ENCODE measurements at regions of chr21 and their contacts with region 1.

Region 1: DNA sequence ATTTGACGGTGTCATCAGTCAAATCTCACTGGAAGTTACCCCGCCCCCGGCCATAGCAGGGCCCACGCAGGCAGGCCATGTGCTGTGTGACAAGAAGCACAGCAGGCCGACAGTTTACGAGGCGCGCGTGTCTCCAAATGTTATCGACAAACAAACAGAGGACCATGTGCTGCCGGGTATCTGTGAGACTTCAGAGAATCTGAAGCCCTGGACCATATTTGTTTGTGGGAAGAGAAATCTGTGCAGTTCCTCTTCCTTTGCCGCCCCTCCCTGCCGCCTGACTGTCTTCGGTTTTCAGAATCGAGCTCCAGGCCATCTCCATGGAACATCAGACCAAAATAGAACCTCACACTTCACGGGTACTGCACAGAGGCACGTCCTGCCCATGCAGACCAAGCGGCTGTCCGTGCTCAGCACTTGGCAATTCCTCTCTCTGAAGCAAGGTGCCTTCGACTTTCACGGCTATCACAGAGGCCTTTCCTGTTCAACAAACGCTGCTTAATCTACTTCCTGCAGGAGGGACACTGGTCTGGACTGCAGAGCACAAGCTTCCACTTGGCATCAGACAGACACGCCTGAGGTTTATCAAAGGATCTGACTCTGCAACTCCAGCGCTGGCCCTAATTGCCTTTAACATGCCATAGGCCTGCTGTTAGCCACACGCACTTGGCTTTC is 135.7 kb upstream of the KRTAP19-8 start:
- DNase-seq: peak in 12 of 14 experiments; percentile 39 to 68 (median 50)
- ATAC-seq: peak; percentile 64
- H3K4me3 ChIP-seq: peak overlapping the region; percentile 22
- H3K4me3 Mint-ChIP-seq: peak overlapping the region; percentile 81
- H3K27ac ChIP-seq: no peak overlapping the region
- H3K27ac Mint-ChIP-seq: peak overlapping the region; percentile 86
- H3K4me1 ChIP-seq: peaks cover 70% of the 10 kb centered on the region
- H3K4me1 Mint-ChIP-seq: peaks cover 92% of the 10 kb centered on the region
- H3K27me3 ChIP-seq: no peaks in the 10 kb centered on the region
- H3K27me3 Mint-ChIP-seq: no peaks in the 10 kb centered on the region
- CTCF ChIP-seq: no peak

Region 2: DNA sequence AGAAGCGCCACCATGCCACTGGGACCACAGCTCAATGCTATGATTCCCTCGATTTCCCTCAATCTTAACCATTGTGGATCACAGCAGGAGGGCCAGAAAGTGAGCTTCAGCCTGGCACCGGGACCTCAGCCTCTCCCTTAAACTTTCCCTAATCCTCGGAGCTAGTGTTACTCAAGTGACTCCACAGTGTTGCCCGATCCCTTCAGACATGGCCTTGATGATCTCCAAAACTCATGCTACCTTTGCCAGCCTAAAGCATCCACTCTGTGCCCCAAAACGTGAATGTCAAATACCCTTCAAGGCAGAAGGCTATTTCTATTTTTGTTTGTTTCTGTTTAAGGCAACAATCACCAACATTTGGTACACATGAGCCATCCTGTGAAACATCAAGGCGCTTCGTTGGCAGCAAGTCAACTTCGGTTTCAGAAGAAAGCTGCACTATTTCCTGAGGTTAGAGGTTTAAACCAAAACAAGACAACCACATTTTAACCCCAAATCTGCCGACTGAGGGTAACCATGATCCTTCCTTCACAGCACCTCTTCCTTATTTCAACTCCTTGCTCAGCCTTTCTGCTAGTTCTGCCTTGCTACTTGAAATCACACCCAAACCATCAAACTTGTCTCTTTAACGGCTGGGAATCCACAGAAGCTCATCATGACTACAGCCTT is 41.3 kb before region 1 on chr21:
- CTCF ChIA-PET with region 1: no interaction called
- POLR2A ChIA-PET with region 1: interaction called, 9 read pairs
- intact Hi-C with region 1: loop called in 1 of 2 experiments (anchors 2 kb)
- DNase-seq: peak; percentile 52 to 92 (median 71)
- ATAC-seq: peak; percentile 91
- H3K4me3 ChIP-seq: peak overlapping the region; percentile 35
- H3K4me3 Mint-ChIP-seq: peak overlapping the region; percentile 68
- H3K27ac ChIP-seq: peak overlapping the region in 1 of 2 donors; percentile 43
- H3K27ac Mint-ChIP-seq: peak overlapping the region; percentile 79
- H3K4me1 ChIP-seq: peaks cover 33% of the 10 kb centered on the region
- H3K4me1 Mint-ChIP-seq: peaks cover 64% of the 10 kb centered on the region
- H3K27me3 ChIP-seq: no peaks in the 10 kb centered on the region
- H3K27me3 Mint-ChIP-seq: no peaks in the 10 kb centered on the region
- CTCF ChIP-seq: no peak

Measured in CD4-positive, alpha-beta T cell (primary cell).